A673 (cell line): ENCODE measurements at regions of chr16 and their contacts with region 1.

Region 1: GRCh38 chr16:5069854-5070253 is 1.8 kb upstream of the ALG1 start:
- DNase-seq: no peak
- H3K4me3 ChIP-seq: no peak overlapping the region
- H3K27ac ChIP-seq: no peak overlapping the region
- H3K4me1 ChIP-seq: peaks cover 3% of the 10 kb centered on the region
- H3K27me3 ChIP-seq: peaks cover 32% of the 10 kb centered on the region
- CTCF ChIP-seq: no peak

Region 2: GRCh38 chr16:5056352-5056751 is 13.5 kb before region 1 on chr16:
- CTCF ChIA-PET with region 1: no interaction called
- POLR2A ChIA-PET with region 1: interaction called, 12 read pairs
- intact Hi-C with region 1: no loop called
- DNase-seq: peak; percentile 63
- H3K4me3 ChIP-seq: no peak overlapping the region
- H3K27ac ChIP-seq: no peak overlapping the region
- H3K4me1 ChIP-seq: no peaks in the 10 kb centered on the region
- H3K27me3 ChIP-seq: peaks cover 5% of the 10 kb centered on the region
- CTCF ChIP-seq: peak; percentile 77

Region 3: DNA sequence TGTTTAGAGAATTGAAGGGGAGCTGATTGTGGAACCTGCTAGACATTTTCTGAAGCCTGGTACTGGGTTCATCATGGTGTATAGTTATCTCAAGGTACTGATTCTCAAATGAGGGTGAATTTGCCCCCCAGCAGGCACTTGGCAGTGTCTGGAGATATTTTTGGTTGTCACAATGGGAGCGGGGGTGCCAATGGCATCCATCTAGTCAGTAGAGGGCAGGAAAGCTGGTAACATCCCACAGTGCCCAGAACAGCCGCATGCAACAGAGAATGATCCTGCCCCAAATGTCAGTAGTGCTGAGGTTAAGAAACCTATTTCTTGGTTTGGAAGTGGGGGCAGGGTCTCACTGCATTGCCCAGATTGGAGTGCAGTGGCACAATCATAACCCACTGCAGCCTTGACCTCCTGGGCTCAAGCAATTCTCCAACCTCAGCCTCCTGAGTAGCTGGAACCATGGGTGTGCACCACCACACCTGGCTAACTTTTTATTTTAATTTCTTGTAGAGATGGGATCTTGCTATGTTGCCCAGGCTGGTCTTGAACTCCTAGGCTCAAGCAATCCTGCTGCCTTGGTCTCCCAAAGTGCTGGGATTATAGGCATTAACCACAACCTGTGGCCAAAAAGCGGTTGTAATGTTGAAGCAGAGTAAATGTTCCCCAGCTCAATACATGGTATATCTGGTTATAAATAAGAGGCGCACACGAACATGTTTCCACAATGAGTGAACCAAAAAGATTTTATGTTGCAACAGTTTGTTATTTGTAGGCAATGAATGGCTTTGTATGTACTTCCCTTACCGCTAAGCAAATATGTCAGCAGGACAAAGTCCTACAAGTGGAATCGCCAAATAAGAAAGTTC is 74.1 kb after region 1 on chr16:
- CTCF ChIA-PET with region 1: no interaction called
- POLR2A ChIA-PET with region 1: no interaction called
- intact Hi-C with region 1: no loop called
- DNase-seq: no peak
- H3K4me3 ChIP-seq: no peak overlapping the region
- H3K27ac ChIP-seq: no peak overlapping the region
- H3K4me1 ChIP-seq: no peaks in the 10 kb centered on the region
- H3K27me3 ChIP-seq: peaks cover 35% of the 10 kb centered on the region
- CTCF ChIP-seq: no peak